Naive thymus-derived CD4-positive, alpha-beta T cell (primary cell): ENCODE measurements at regions of chr5 and their contacts with region 1.

Region 1: DNA sequence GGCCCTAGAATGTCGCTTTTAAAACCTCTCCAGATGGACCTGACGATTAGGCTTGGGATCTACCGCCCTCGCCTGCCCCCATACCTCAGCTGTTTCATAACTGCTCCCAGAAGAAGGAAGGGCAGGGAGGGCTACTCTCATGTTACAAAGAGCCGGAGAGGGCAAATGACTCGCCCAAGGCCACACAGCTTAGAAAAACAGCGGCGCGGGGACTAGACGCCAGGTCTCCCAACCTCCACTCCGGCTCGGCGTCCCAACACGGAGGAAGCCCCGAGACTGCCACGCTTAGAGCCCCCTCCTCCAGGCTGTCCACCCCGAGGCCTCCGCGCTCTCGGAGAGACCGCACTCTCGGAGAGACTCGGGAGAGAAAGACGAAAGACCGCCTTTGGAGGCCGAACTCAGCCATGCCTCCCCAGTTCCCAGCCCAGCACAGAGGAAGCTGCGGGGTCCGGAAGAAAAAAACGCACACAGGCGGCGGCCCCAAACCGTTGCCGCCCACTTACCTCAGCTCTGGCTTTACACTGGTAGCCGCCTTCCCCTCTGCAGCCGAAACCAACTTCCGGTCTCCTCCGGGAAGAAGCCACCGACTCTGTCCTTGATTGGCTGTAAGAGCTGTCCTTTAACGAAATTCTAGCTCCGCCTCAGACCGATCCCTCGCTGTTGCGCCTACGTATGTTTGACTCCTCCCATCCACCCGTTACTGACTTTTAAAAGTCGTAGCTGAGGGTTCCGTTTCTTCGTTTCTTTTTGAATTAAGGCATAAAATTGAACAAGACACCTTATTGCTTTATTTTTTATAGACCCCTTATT is at the start of gene MED7:
- DNase-seq: peak; percentile 66 to 98 (median 96)
- ATAC-seq: peak; percentile 98
- H3K4me3 ChIP-seq: peak within 1 kb of the TSS; percentile 82
- H3K4me3 Mint-ChIP-seq: peak within 1 kb of the TSS; percentile 92 to 99 (median 96)
- H3K27ac ChIP-seq: peak within 1 kb of the TSS; percentile 94
- H3K27ac Mint-ChIP-seq: peak within 1 kb of the TSS; percentile 97 to 100 (median 99)
- H3K4me1 ChIP-seq: peaks cover 11 to 22% of the 10 kb centered on the region in 2 donors
- H3K4me1 Mint-ChIP-seq: peaks cover 11 to 64% (median 48%) of the 10 kb centered on the region in 7 donors
- H3K27me3 ChIP-seq: no peaks in the 10 kb centered on the region
- H3K27me3 Mint-ChIP-seq: no peaks in the 10 kb centered on the region
- total RNA-seq, gene MED7: 5.8 to 18.5 (median 14.2) TPM

Region 2: DNA sequence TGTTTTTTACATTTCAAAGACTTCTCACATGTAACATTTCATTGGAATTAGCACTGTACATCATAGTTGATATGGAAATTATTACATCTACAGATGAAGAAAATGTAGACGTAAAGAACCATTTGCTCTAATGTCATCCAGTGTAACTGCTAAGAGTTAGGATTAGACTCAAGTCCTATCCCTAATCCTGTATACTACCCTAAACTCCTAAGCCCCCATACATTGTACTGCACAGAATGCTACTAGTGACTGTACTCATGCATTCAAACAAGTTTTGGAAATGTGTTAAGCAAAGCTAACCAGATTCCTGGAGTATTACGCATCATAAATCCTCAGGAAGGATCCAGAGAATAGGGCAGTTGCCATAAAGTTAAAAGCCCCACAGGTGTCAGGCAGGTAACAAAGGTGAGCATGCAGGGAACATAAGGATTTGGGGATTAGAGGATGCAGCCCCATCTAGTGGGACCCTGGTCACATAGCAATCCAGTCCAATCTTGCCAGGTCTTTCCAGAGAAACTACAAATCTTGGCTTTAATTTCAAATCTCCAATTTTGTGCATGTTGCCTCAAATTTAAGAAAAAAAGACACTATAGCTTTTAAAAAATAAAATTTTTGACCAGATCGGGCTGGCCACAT is 115.6 kb before region 1 on chr5:
- CTCF ChIA-PET with region 1: no interaction called
- POLR2A ChIA-PET with region 1: no interaction called
- intact Hi-C with region 1: loop called in 1 of 2 experiments (anchors 2 kb)
- DNase-seq: no peak
- ATAC-seq: no peak
- H3K4me3 ChIP-seq: no peak overlapping the region
- H3K4me3 Mint-ChIP-seq: peak overlapping the region in 1 of 10 donors; percentile 21
- H3K27ac ChIP-seq: no peak overlapping the region
- H3K27ac Mint-ChIP-seq: peak overlapping the region in 3 of 9 donors; percentile 41 to 89 (median 51)
- H3K4me1 ChIP-seq: peaks cover 16 to 23% of the 10 kb centered on the region in 2 donors
- H3K4me1 Mint-ChIP-seq: peaks cover 15 to 91% (median 30%) of the 10 kb centered on the region in 7 donors
- H3K27me3 ChIP-seq: no peaks in the 10 kb centered on the region
- H3K27me3 Mint-ChIP-seq: no peaks in the 10 kb centered on the region

Region 3: DNA sequence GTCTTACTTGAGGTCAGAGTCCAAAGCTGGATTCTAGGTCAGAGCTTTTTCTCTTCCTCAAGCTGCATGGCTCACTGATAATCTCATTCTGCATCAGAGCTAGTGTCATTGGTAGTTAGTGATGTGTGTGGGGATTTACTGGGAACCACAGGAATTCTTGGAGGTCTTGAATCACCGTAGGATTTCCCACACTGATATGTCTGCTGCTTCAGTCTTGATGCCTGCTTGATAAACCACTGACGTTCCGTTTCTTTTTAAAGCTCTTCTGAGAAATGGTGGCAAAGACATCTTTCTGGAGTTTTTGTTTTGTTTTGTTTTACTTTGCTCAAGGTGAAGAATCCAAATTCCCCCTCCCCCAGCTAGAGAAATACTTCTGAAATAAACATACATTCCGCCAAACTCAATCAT is 24.7 kb after region 1 on chr5:
- CTCF ChIA-PET with region 1: no interaction called
- POLR2A ChIA-PET with region 1: interaction called, 10 read pairs
- intact Hi-C with region 1: loop called in 1 of 2 experiments (anchors 1 kb)
- DNase-seq: no peak
- ATAC-seq: peak; percentile 34
- H3K4me3 ChIP-seq: peak overlapping the region; percentile 21
- H3K4me3 Mint-ChIP-seq: peak overlapping the region; percentile 50 to 81 (median 72)
- H3K27ac ChIP-seq: peak overlapping the region; percentile 62
- H3K27ac Mint-ChIP-seq: peak overlapping the region; percentile 68 to 93 (median 87)
- H3K4me1 ChIP-seq: peaks cover 16 to 33% of the 10 kb centered on the region in 2 donors
- H3K4me1 Mint-ChIP-seq: peaks cover 31 to 78% (median 72%) of the 10 kb centered on the region in 7 donors
- H3K27me3 ChIP-seq: no peaks in the 10 kb centered on the region
- H3K27me3 Mint-ChIP-seq: no peaks in the 10 kb centered on the region

Region 4: DNA sequence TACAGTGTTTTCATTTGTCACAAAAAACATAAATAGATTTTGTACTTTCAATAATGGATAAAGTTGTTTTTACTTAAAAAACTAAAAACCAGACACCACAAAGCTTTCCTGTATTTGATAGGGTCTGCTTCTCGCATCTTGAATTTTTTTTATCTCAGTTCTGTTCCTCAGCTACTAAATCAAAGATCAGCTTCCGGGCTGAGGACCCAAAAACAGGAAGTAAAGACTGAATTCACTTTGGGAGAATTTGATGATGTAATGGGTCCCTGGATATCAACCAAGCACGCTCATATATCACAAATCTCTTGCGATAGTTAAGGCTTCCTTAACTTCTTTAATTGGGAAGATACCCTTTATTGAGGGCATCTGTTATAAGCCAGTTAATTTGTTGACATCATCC is 62.2 kb after region 1 on chr5:
- CTCF ChIA-PET with region 1: interaction called, 8 read pairs
- POLR2A ChIA-PET with region 1: interaction called, 20 read pairs
- intact Hi-C with region 1: loop called in 1 of 2 experiments (anchors 5 kb)
- DNase-seq: peak in 7 of 9 donors; percentile 44 to 84 (median 73)
- ATAC-seq: peak; percentile 69
- H3K4me3 ChIP-seq: peak overlapping the region; percentile 10
- H3K4me3 Mint-ChIP-seq: peak overlapping the region; percentile 7 to 93 (median 76)
- H3K27ac ChIP-seq: peak overlapping the region; percentile 64
- H3K27ac Mint-ChIP-seq: peak overlapping the region; percentile 79 to 98 (median 95)
- H3K4me1 ChIP-seq: peaks cover 77 to 87% of the 10 kb centered on the region in 2 donors
- H3K4me1 Mint-ChIP-seq: peaks cover 43 to 96% (median 90%) of the 10 kb centered on the region in 7 donors
- H3K27me3 ChIP-seq: no peaks in the 10 kb centered on the region
- H3K27me3 Mint-ChIP-seq: no peaks in the 10 kb centered on the region

Region 5: DNA sequence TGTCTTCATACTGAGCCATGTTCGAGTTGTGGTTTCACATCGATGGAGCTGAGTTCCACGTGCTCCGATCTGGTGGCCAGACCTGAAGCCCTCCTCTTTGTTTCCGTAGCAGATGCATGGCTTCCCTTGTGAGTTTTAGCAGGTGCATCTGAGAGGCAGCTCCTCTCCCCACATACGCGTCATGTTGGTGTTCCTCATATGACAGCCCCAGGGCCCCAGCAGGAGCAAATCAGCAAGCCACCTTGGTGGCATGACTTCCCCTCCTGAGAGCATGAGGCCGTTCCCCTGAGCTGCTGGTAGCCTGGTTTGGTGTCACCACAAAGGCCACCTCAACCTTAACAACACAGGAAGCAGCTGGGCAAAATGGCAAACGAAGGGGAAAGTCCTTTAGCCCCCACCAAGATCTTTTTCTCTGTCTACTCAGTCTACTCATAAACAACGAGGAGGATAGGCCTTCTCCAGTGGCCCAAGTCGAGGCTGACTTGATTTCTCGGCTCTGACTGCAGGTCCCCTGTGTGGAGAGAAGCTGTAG is 129.3 kb after region 1 on chr5:
- CTCF ChIA-PET with region 1: interaction called, 16 read pairs
- POLR2A ChIA-PET with region 1: interaction called, 15 read pairs
- intact Hi-C with region 1: loop called (anchors 1 kb)
- DNase-seq: peak; percentile 63 to 94 (median 91)
- ATAC-seq: peak; percentile 95
- H3K4me3 ChIP-seq: peak overlapping the region; percentile 37
- H3K4me3 Mint-ChIP-seq: peak overlapping the region; percentile 71 to 95 (median 84)
- H3K27ac ChIP-seq: peak overlapping the region; percentile 84
- H3K27ac Mint-ChIP-seq: peak overlapping the region; percentile 95 to 100 (median 99)
- H3K4me1 ChIP-seq: peaks cover 76 to 78% of the 10 kb centered on the region in 2 donors
- H3K4me1 Mint-ChIP-seq: peaks cover 73 to 95% (median 90%) of the 10 kb centered on the region in 7 donors
- H3K27me3 ChIP-seq: no peaks in the 10 kb centered on the region
- H3K27me3 Mint-ChIP-seq: no peaks in the 10 kb centered on the region

Region 6: DNA sequence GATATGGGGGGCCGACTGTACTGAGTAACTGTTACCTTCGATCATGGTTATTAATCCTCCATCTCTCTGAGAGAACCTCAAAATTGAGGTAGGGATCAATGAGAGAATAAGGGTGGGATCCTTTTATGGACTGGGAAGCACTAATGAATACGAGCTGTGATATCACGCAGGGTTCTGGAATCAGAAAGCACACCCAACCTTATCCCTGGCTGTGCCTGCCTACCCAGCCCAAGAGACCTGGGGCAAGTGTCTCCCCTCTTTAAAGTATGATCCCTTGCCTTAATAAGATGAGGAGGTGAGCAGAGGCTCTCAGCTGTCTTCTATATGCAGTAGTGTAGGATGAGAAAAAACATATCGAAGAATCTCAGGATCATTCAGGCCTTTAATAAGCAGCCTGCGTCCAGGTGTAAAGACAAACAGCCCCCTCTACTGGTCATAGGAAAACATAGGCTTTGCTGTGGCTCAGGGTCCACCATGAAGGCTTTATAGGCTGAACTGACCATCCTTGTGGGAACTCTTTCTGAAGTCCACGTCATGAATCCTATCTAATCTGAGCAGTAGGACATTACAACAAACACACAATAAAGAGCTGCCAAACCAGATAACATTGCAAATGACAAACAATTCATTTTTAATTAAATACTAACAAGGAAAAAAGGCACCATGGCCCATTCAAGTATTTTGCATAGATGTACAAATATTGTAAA is 334.3 kb after region 1 on chr5:
- CTCF ChIA-PET with region 1: interaction called, 3 read pairs
- POLR2A ChIA-PET with region 1: no interaction called
- intact Hi-C with region 1: loop called in 1 of 2 experiments (anchors 10 kb)
- DNase-seq: peak in 5 of 9 donors; percentile 14 to 34 (median 17)
- ATAC-seq: peak; percentile 60
- H3K4me3 ChIP-seq: no peak overlapping the region
- H3K4me3 Mint-ChIP-seq: no peak overlapping the region
- H3K27ac ChIP-seq: no peak overlapping the region
- H3K27ac Mint-ChIP-seq: peak overlapping the region in 1 of 9 donors; percentile 56
- H3K4me1 ChIP-seq: no peaks in the 10 kb centered on the region
- H3K4me1 Mint-ChIP-seq: peaks cover 0 to 79% (median 0%) of the 10 kb centered on the region in 7 donors
- H3K27me3 ChIP-seq: no peaks in the 10 kb centered on the region
- H3K27me3 Mint-ChIP-seq: no peaks in the 10 kb centered on the region